ENCODE measurements at regions of chr2 and their contacts with region 1.

Region 1: GRCh38 chr2:58336416-58336815 is 95.3 kb upstream of the FANCL start:
- DNase-seq: no peak
- ATAC-seq: no peak
- H3K4me3 ChIP-seq: no peak overlapping the region
- H3K27ac ChIP-seq: no peak overlapping the region
- H3K4me1 ChIP-seq: peaks cover 25% of the 10 kb centered on the region
- H3K27me3 ChIP-seq: no peaks in the 10 kb centered on the region
- CTCF ChIP-seq: no peak

Region 2: DNA sequence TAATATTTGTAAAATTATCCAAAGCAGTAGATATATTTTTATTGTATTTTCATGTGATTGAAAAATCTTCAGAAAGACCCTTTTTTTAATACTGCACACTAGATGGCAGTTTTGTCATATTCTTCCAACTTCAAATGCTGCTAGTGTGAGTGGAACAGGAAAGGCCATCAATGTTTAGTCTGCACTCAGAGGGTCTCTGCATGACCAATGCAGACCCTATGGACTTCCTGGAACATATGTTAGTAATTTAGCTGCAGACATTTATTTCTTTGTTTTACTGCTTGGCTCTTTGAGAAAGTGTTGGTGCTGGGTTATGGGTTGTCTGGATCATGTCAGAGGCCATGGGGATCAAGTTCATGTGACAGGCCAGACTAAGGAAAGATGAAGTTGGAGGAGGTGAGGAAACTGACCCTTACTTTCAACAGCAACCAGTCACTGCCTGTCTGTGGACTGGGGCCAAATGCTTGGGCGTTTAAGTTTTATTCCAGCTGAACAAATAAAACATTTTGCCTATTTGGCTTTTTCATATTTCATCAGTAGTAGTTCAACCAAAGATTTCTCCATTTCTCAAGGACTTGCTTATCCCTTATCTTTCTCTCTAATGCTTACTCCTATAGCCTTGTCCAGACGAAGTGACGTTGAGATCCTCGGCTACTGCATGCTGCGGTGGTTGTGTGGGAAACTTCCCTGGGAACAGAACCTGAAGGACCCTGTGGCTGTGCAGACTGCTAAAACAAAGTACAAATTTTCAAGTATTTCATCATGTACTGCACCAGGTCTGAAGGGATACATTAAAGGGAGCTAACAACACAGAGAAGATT is 205.0 kb before region 1 on chr2:
- CTCF ChIA-PET with region 1: no interaction called
- POLR2A ChIA-PET with region 1: no interaction called
- intact Hi-C with region 1: loop called (anchors 10 kb)
- DNase-seq: no peak
- ATAC-seq: peak; percentile 43; the same call in 1 of the 2 replicates
- H3K4me3 ChIP-seq: no peak overlapping the region
- H3K27ac ChIP-seq: no peak overlapping the region
- H3K4me1 ChIP-seq: 0 out of 2 replicates have a peak, but pooled peaks cover 7% of the 10 kb centered on the region
- H3K27me3 ChIP-seq: no peaks in the 10 kb centered on the region
- CTCF ChIP-seq: peak; percentile 49

Region 3: GRCh38 chr2:58261215-58261614 is 75.2 kb before region 1 on chr2:
- CTCF ChIA-PET with region 1: no interaction called
- POLR2A ChIA-PET with region 1: no interaction called
- intact Hi-C with region 1: no loop called
- DNase-seq: peak; percentile 48
- ATAC-seq: peak; percentile 60; the same call in 1 of the 2 replicates
- H3K4me3 ChIP-seq: no peak overlapping the region
- H3K27ac ChIP-seq: no peak overlapping the region
- H3K4me1 ChIP-seq: peaks cover 20% of the 10 kb centered on the region
- H3K27me3 ChIP-seq: no peaks in the 10 kb centered on the region
- CTCF ChIP-seq: no peak

Region 4: DNA sequence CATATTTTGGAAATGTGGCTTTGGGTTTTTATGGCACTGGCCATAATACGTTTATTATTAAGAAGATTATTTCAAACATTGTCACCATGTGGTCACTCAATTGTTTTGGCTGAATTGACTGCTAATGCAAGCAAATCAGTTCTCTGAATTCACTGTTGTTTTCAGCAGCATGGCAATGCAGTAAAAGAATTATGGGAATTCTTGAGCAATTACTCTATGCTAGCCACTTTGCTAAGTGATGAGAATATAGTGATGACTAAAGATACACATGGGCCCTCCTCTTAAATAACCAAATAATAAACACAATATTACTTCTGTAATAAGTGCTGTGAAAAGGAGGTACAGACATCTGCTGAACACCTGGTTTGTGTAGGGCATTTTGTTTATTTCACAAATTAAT is 37.3 kb before region 1 on chr2:
- CTCF ChIA-PET with region 1: no interaction called
- POLR2A ChIA-PET with region 1: no interaction called
- intact Hi-C with region 1: loop called (anchors 1 kb)
- DNase-seq: peak; percentile 62
- ATAC-seq: peak; percentile 96
- H3K4me3 ChIP-seq: no peak overlapping the region
- H3K27ac ChIP-seq: no peak overlapping the region
- H3K4me1 ChIP-seq: peaks cover 12% of the 10 kb centered on the region
- H3K27me3 ChIP-seq: no peaks in the 10 kb centered on the region
- CTCF ChIP-seq: no peak

Region 5: DNA sequence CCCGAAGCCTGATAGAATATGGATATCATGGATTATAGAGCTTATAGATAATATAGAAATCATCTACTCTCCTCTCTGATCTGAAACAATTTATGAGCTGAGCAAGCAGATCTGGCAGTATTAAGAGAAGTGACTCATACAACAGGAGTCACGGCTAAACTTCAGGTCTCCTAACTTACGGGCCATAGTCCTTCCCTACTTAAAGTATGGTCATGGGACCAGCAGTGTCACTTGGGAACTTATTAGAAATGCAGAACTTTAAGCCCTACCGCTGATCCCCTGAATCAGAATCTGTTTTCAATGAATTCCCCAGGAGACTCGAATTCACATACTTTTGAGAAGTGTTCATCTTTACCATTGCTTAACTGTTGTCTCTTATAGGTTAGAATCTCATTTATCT is 100.5 kb after region 1 on chr2:
- CTCF ChIA-PET with region 1: no interaction called
- POLR2A ChIA-PET with region 1: no interaction called
- intact Hi-C with region 1: loop called (anchors 2 kb)
- DNase-seq: peak; percentile 76
- ATAC-seq: peak; percentile 96
- H3K4me3 ChIP-seq: no peak overlapping the region
- H3K27ac ChIP-seq: no peak overlapping the region
- H3K4me1 ChIP-seq: peaks cover 12% of the 10 kb centered on the region
- H3K27me3 ChIP-seq: no peaks in the 10 kb centered on the region
- CTCF ChIP-seq: no peak

Measured in PC-3 (cell line).